Caco-2 (cell line): ENCODE measurements at regions of chr13 and their contacts with region 1.

Region 1: GRCh38 chr13:69857183-69857821 is 250.3 kb upstream of the ATXN8OS start:
- DNase-seq: peak in 1 of 2 experiments; percentile 54
- H3K4me3 ChIP-seq: no peak overlapping the region
- H3K4me3 Mint-ChIP-seq: peak overlapping the region; percentile 1
- H3K27ac Mint-ChIP-seq: peak overlapping the region; percentile 6
- H3K4me1 ChIP-seq: peaks cover 13% of the 10 kb centered on the region
- H3K4me1 Mint-ChIP-seq: peaks cover 11% of the 10 kb centered on the region
- H3K27me3 ChIP-seq: no peaks in the 10 kb centered on the region
- H3K27me3 Mint-ChIP-seq: no peaks in the 10 kb centered on the region
- CTCF ChIP-seq: peak; percentile 53 to 55

Region 2: DNA sequence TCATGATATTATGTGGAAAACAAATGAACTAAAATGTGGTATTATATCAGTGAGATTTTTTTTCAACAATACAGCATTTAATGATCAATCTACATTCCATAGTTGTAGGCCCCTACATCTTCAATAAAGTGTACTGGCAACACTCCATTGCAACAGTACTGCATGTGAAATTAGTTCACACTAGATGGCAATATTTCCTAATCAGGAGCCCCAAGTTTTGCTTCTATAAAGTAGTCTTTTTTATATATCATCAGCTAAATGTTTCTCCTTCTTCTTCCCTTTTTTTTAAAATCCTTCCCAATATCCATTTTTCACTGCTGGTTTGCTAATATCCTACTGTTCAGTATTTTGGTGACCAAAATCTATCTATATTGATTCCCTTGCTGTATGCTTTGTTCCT is 278.0 kb before region 1 on chr13:
- CTCF ChIA-PET with region 1: no interaction called
- POLR2A ChIA-PET with region 1: no interaction called
- intact Hi-C with region 1: loop called (anchors 1 kb)
- DNase-seq: no peak
- H3K4me3 ChIP-seq: no peak overlapping the region
- H3K4me3 Mint-ChIP-seq: no peak overlapping the region
- H3K27ac Mint-ChIP-seq: no peak overlapping the region
- H3K4me1 ChIP-seq: no peaks in the 10 kb centered on the region
- H3K4me1 Mint-ChIP-seq: no peaks in the 10 kb centered on the region
- H3K27me3 ChIP-seq: no peaks in the 10 kb centered on the region
- H3K27me3 Mint-ChIP-seq: peaks cover 6% of the 10 kb centered on the region
- CTCF ChIP-seq: peak in 1 of 2 experiments; percentile 8